ENCODE measurements at regions of chrX and their contacts with region 1.

Region 1: GRCh38 chrX:47497273-47497672 is 14.3 kb upstream of the ZNF41 start:
- DNase-seq: no peak
- ATAC-seq: no peak
- H3K4me3 ChIP-seq: no peak overlapping the region
- H3K27ac ChIP-seq: no peak overlapping the region
- H3K4me1 ChIP-seq: no peaks in the 10 kb centered on the region
- H3K27me3 ChIP-seq: no peaks in the 10 kb centered on the region
- CTCF ChIP-seq: peak; percentile 49; the same call in 1 of the 2 replicates

Region 2: DNA sequence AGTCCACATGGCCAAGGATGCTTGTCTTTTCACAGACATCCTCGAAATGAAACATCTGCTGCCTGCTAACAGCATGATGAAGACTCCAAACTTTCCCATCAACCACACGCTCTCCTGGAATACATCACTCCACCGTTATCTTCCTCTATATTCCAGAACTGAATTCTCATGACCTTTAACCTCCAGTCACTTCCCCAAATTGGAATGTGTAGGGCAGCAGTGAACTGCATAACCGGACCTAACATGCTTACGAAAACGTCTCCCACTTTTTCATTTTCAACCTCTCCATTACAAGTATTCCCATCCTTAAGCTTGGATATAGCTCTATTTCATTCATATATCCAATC is 16.4 kb after region 1 on chrX:
- CTCF ChIA-PET with region 1: interaction called, 4 read pairs
- POLR2A ChIA-PET with region 1: interaction called, 11 read pairs
- in situ Hi-C with region 1: no loop called
- intact Hi-C with region 1: no loop called
- DNase-seq: no peak
- ATAC-seq: no peak
- H3K4me3 ChIP-seq: peak overlapping the region; percentile 30 to 56
- H3K27ac ChIP-seq: no peak overlapping the region
- H3K4me1 ChIP-seq: no peaks in the 10 kb centered on the region
- H3K27me3 ChIP-seq: no peaks in the 10 kb centered on the region
- CTCF ChIP-seq: no peak

Region 3: DNA sequence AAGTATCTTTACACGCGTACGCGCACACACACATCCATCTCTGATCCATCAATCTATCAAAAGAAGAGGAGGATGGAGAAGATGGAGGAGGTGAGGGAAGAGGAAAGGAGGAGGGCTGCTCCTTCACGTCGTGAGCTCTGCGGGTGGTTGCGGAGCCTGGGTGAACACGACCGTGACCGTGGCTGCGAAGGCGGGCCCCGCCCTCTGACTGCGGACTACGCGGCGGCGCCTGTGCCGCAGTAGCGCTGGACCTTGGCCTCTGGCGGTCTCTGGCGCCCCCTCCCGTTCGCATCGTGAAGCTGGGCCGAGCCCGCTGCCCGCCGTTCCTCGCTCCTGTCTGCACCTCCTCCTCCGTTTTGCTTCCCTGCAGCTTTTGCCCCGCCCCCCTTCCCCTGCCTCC is 26.0 kb after region 1 on chrX:
- CTCF ChIA-PET with region 1: interaction called, 7 read pairs
- POLR2A ChIA-PET with region 1: no interaction called
- in situ Hi-C with region 1: no loop called
- intact Hi-C with region 1: loop called (anchors 1 kb)
- DNase-seq: no peak
- ATAC-seq: peak; percentile 99
- H3K4me3 ChIP-seq: peak overlapping the region; percentile 51 to 62
- H3K27ac ChIP-seq: peak overlapping the region; percentile 54
- H3K4me1 ChIP-seq: no peaks in the 10 kb centered on the region
- H3K27me3 ChIP-seq: no peaks in the 10 kb centered on the region
- CTCF ChIP-seq: peak; percentile 92

Region 4: GRCh38 chrX:47608130-47608810 is 111.0 kb after region 1 on chrX:
- CTCF ChIA-PET with region 1: no interaction called
- POLR2A ChIA-PET with region 1: interaction called, 15 read pairs
- in situ Hi-C with region 1: no loop called
- intact Hi-C with region 1: no loop called
- DNase-seq: no peak
- ATAC-seq: no peak
- H3K4me3 ChIP-seq: no peak overlapping the region
- H3K27ac ChIP-seq: no peak overlapping the region
- H3K4me1 ChIP-seq: no peaks in the 10 kb centered on the region
- H3K27me3 ChIP-seq: no peaks in the 10 kb centered on the region
- CTCF ChIP-seq: no peak

Region 5: GRCh38 chrX:47683146-47683828 is 186.0 kb after region 1 on chrX:
- CTCF ChIA-PET with region 1: no interaction called
- POLR2A ChIA-PET with region 1: no interaction called
- in situ Hi-C with region 1: no loop called
- intact Hi-C with region 1: no loop called
- DNase-seq: no peak
- ATAC-seq: no peak
- H3K4me3 ChIP-seq: no peak overlapping the region
- H3K27ac ChIP-seq: no peak overlapping the region
- H3K4me1 ChIP-seq: no peaks in the 10 kb centered on the region
- H3K27me3 ChIP-seq: peaks cover 4% of the 10 kb centered on the region
- CTCF ChIP-seq: no peak